Naive thymus-derived CD4-positive, alpha-beta T cell (primary cell): ENCODE measurements at regions of chr13 and their contacts with region 1.

Region 1: GRCh38 chr13:27620377-27621115 is at the start of gene LNX2:
- DNase-seq: peak; percentile 94 to 98 (median 95)
- ATAC-seq: peak; percentile 92
- H3K4me3 ChIP-seq: peak within 1 kb of the TSS; percentile 95
- H3K4me3 Mint-ChIP-seq: peak within 1 kb of the TSS; percentile 90 to 96 (median 95)
- H3K27ac ChIP-seq: peak within 1 kb of the TSS; percentile 97
- H3K27ac Mint-ChIP-seq: peak within 1 kb of the TSS; percentile 87 to 98 (median 97)
- H3K4me1 ChIP-seq: peaks cover 32 to 33% of the 10 kb centered on the region in 2 donors
- H3K4me1 Mint-ChIP-seq: peaks cover 40 to 69% (median 63%) of the 10 kb centered on the region in 7 donors
- H3K27me3 ChIP-seq: no peaks in the 10 kb centered on the region
- H3K27me3 Mint-ChIP-seq: no peaks in the 10 kb centered on the region
- total RNA-seq, gene LNX2: 3.2 to 10.7 (median 7.1) TPM

Region 2: DNA sequence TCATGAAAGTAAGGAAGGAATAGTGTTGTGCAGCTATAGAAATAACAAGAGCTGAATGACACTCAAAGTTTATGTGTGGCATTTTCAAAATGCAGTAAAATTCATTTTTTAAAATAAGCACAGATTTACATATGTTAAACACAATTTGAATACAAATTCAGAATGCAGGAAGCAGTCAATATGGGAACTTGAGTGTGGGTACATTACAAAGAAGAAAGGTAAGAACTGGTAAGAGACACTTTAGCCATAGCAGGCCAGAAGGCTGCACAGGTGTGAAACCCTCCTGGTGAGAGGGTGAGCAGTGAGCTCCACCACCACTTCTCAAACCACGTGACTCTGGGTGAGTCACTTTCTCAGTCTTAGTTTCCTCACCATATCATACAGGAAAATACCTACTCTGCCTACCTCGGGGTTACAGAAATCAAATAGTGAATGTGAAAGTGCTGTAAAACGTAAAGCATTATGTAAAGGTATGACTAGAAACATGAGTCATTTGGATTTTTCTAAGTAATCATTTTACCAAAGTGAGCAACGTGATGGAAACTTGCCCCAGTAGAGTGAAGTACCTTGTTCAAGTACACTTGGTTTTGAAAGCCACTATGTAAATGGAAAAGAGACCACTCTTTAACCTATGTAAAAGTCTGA is 489.4 kb before region 1 on chr13:
- CTCF ChIA-PET with region 1: no interaction called
- POLR2A ChIA-PET with region 1: no interaction called
- intact Hi-C with region 1: loop called in 1 of 2 experiments (anchors 5 kb)
- DNase-seq: peak in 3 of 9 donors; percentile 13 to 71 (median 46)
- ATAC-seq: peak; percentile 90
- H3K4me3 ChIP-seq: no peak overlapping the region
- H3K4me3 Mint-ChIP-seq: peak overlapping the region in 5 of 10 donors; percentile 29 to 71 (median 47)
- H3K27ac ChIP-seq: no peak overlapping the region
- H3K27ac Mint-ChIP-seq: peak overlapping the region in 5 of 9 donors; percentile 60 to 87 (median 76)
- H3K4me1 ChIP-seq: peaks cover 0 to 14% of the 10 kb centered on the region in 2 donors
- H3K4me1 Mint-ChIP-seq: peaks cover 46 to 89% (median 82%) of the 10 kb centered on the region in 7 donors
- H3K27me3 ChIP-seq: no peaks in the 10 kb centered on the region
- H3K27me3 Mint-ChIP-seq: no peaks in the 10 kb centered on the region

Region 3: GRCh38 chr13:27374650-27375049 is 245.9 kb before region 1 on chr13:
- CTCF ChIA-PET with region 1: interaction called, 3 read pairs
- POLR2A ChIA-PET with region 1: no interaction called
- intact Hi-C with region 1: loop called in 1 of 2 experiments (anchors 2 kb)
- DNase-seq: peak; percentile 16 to 57 (median 46)
- ATAC-seq: peak; percentile 92
- H3K4me3 ChIP-seq: no peak overlapping the region
- H3K4me3 Mint-ChIP-seq: peak overlapping the region in 1 of 10 donors; percentile 19
- H3K27ac ChIP-seq: no peak overlapping the region
- H3K27ac Mint-ChIP-seq: no peak overlapping the region
- H3K4me1 ChIP-seq: no peaks in the 10 kb centered on the region
- H3K4me1 Mint-ChIP-seq: peaks cover 0 to 17% (median 4%) of the 10 kb centered on the region in 7 donors
- H3K27me3 ChIP-seq: no peaks in the 10 kb centered on the region
- H3K27me3 Mint-ChIP-seq: peaks cover 10 to 26% (median 17%) of the 10 kb centered on the region in 5 donors

Region 4: DNA sequence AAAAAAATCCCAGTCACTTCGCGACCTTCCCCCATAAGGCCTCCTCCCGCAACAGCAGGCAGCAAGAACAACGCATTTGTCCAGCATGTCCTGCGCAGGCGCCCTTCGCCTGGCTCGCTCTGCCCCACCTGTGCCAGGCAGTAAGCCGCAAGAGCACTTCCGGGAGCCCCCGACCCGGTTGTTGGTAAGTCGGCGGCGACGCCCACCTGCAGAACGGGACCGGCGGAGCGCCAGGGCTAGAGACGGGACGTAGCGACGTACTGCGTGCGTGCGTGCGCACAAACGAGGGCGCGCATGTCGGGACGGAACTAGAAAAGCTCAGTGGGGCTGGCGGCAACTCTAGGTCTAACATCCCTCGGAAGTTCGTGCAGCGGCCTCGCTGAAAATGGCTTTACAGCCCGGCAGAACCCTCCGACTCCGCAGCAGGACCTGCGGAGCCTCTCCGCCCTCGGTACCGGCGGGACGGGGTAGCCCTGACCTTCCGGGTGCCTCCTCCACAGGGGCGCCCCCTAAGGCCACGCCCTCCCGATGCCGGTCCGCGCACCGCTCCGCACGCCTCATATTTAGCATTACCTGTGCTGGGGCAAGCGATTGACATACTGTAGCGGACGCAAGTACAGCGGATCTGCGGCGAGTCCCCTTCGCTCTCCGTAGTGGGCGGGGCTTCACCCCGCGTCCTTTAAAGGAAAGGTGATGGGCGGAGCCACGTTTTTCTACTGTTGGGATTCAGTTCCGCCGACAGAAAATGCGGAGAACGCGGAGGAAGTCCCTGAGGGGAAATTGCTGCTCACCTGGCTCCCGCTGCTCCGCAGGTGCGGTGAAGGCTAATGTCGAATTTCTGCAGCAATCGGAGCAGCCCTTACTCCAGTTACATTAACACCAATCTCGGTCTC is 170.4 kb before region 1 on chr13 and contains the start of gene MTIF3:
- CTCF ChIA-PET with region 1: interaction called, 5 read pairs
- POLR2A ChIA-PET with region 1: interaction called, 54 read pairs
- intact Hi-C with region 1: loop called (anchors 1 kb)
- DNase-seq: peak; percentile 90 to 99 (median 98)
- ATAC-seq: peak; percentile 89
- H3K4me3 ChIP-seq: peak within 1 kb of the TSS; percentile 82
- H3K4me3 Mint-ChIP-seq: peak within 1 kb of the TSS; percentile 89 to 96 (median 94)
- H3K27ac ChIP-seq: peak within 1 kb of the TSS; percentile 96
- H3K27ac Mint-ChIP-seq: peak within 1 kb of the TSS; percentile 94 to 100 (median 98)
- H3K4me1 ChIP-seq: peaks cover 35 to 41% of the 10 kb centered on the region in 2 donors
- H3K4me1 Mint-ChIP-seq: peaks cover 45 to 75% (median 56%) of the 10 kb centered on the region in 7 donors
- H3K27me3 ChIP-seq: no peaks in the 10 kb centered on the region
- H3K27me3 Mint-ChIP-seq: no peaks in the 10 kb centered on the region
- total RNA-seq, gene MTIF3: 28.4 to 89.6 (median 51.3) TPM

Region 5: DNA sequence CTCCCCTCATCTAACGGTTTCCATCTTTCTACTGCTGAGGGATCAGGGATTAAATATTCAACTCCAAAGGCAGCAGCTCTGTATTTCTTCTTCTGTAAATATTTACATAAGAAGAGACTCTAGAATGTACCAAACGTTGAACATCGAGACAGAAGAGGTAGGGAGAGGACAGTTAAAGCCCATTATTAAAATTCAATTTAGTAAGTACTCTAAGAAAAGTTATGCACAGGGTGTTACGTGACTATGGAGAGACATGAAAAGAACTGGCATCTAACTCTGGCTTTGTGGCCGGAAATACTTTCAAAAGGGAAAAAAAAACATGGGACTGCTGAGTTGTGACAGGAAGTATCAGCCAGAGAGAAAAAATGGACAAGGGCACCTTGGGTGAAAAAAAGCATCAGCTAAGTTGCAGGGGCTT is 36.9 kb before region 1 on chr13:
- CTCF ChIA-PET with region 1: no interaction called
- POLR2A ChIA-PET with region 1: interaction called, 3 read pairs
- intact Hi-C with region 1: loop called (anchors 5 kb)
- DNase-seq: peak in 6 of 9 donors; percentile 0 to 32 (median 20)
- ATAC-seq: no peak
- H3K4me3 ChIP-seq: no peak overlapping the region
- H3K4me3 Mint-ChIP-seq: peak overlapping the region; percentile 9 to 69 (median 50)
- H3K27ac ChIP-seq: no peak overlapping the region
- H3K27ac Mint-ChIP-seq: peak overlapping the region in 7 of 9 donors; percentile 9 to 69 (median 30)
- H3K4me1 ChIP-seq: peaks cover 0 to 13% of the 10 kb centered on the region in 2 donors
- H3K4me1 Mint-ChIP-seq: peaks cover 22 to 57% (median 45%) of the 10 kb centered on the region in 7 donors
- H3K27me3 ChIP-seq: no peaks in the 10 kb centered on the region
- H3K27me3 Mint-ChIP-seq: peaks cover 0 to 3% (median 0%) of the 10 kb centered on the region in 5 donors

Region 6: DNA sequence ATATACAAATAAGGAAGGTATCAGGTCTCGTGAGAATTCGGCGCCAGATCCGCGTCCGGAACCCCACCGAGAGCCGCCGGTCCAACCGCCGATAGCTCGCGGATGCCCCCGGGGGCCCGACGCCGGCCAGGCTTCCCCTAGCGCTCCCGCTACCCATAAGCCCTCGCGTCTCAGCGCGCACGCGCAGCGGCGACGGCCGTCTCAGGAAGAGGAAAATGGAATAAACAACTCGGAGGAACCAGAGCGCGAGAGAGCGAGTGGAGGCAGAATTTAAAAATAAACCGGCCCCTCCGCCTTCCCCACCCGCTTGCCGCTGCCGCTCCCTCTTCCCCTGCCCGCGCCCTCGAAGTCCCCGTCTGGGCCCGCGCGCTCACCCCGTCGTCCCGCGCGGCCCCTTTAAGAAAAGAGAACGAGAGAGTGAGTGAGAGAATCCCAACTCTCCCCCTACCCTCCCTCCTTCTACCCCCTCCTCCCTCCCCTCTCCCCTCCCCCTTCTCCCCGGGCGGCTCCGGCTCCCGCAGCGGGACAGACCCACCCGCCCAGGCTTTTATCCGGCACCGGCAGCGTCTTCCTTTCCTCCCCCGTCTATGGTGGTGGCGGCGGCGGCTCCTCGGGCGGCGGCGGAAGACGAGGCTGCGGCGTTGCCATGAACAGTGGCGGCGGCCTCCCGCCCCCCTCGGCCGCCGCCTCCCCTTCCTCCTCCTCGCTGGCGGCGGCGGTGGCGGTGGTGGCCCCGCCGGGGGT is 517.6 kb after region 1 on chr13 and contains the start of gene PAN3:
- CTCF ChIA-PET with region 1: no interaction called
- POLR2A ChIA-PET with region 1: no interaction called
- intact Hi-C with region 1: loop called (anchors 1 kb)
- DNase-seq: peak; percentile 88 to 92 (median 91)
- ATAC-seq: peak; percentile 73
- H3K4me3 ChIP-seq: peak within 1 kb of the TSS; percentile 56
- H3K4me3 Mint-ChIP-seq: peak within 1 kb of the TSS; percentile 90 to 99 (median 96)
- H3K27ac ChIP-seq: peak within 1 kb of the TSS; percentile 99
- H3K27ac Mint-ChIP-seq: peak within 1 kb of the TSS; percentile 96 to 99 (median 98)
- H3K4me1 ChIP-seq: peaks cover 24% of the 10 kb centered on the region in 2 donors
- H3K4me1 Mint-ChIP-seq: peaks cover 43 to 52% (median 47%) of the 10 kb centered on the region in 7 donors
- H3K27me3 ChIP-seq: no peaks in the 10 kb centered on the region
- H3K27me3 Mint-ChIP-seq: peaks cover 0 to 2% (median 0%) of the 10 kb centered on the region in 5 donors
- total RNA-seq, gene PAN3: 49.9 to 82.5 (median 76.4) TPM